Esophagus muscularis mucosa (tissue), 4 donors: ENCODE measurements at regions of chr11 and their contacts with region 1.

Region 1: GRCh38 chr11:103682318-103683184 is 353.9 kb upstream of the DDI1 start:
- DNase-seq: peak; percentile 92
- H3K4me3 ChIP-seq: no peak overlapping the region
- H3K27ac ChIP-seq: no peak overlapping the region
- H3K4me1 ChIP-seq: peaks cover 6 to 13% (median 12%) of the 10 kb centered on the region in 4 donors
- H3K27me3 ChIP-seq: no peaks in the 10 kb centered on the region
- CTCF ChIP-seq: peak; percentile 75 to 86 (median 80)
- EP300 ChIP-seq: no peak
- POLR2A ChIP-seq: no peak

Region 2: GRCh38 chr11:104151404-104152204 is 469.1 kb after region 1 on chr11:
- intact Hi-C with region 1: loop called (anchors 5 kb)
- DNase-seq: no peak
- H3K4me3 ChIP-seq: no peak overlapping the region
- H3K27ac ChIP-seq: no peak overlapping the region
- H3K4me1 ChIP-seq: no peaks in the 10 kb centered on the region
- H3K27me3 ChIP-seq: no peaks in the 10 kb centered on the region
- CTCF ChIP-seq: peak; percentile 23 to 46 (median 39)
- EP300 ChIP-seq: no peak
- POLR2A ChIP-seq: no peak